ENCODE measurements at regions of chr12 and their contacts with region 1.

Region 1: GRCh38 chr12:111812881-111813741 is 28.9 kb upstream of the MAPKAPK5 start:
- DNase-seq: peak; percentile 50 to 76
- H3K4me3 ChIP-seq: no peak overlapping the region
- H3K27ac ChIP-seq: no peak overlapping the region
- H3K4me1 ChIP-seq: no peaks in the 10 kb centered on the region
- H3K27me3 ChIP-seq: no peaks in the 10 kb centered on the region
- CTCF ChIP-seq: peak; percentile 69 to 88 (median 86)
- EP300 ChIP-seq: no peak
- POLR2A ChIP-seq: no peak
- RAD21 ChIP-seq: peak; percentile 84 to 85

Region 2: GRCh38 chr12:111557271-111558106 is 255.6 kb before region 1 on chr12:
- CTCF ChIA-PET with region 1: no interaction called
- POLR2A ChIA-PET with region 1: no interaction called
- DNase-seq: no peak
- H3K4me3 ChIP-seq: no peak overlapping the region
- H3K27ac ChIP-seq: no peak overlapping the region
- H3K4me1 ChIP-seq: no peaks in the 10 kb centered on the region
- H3K27me3 ChIP-seq: no peaks in the 10 kb centered on the region
- CTCF ChIP-seq: no peak
- EP300 ChIP-seq: no peak
- POLR2A ChIP-seq: no peak
- RAD21 ChIP-seq: no peak

Region 3: DNA sequence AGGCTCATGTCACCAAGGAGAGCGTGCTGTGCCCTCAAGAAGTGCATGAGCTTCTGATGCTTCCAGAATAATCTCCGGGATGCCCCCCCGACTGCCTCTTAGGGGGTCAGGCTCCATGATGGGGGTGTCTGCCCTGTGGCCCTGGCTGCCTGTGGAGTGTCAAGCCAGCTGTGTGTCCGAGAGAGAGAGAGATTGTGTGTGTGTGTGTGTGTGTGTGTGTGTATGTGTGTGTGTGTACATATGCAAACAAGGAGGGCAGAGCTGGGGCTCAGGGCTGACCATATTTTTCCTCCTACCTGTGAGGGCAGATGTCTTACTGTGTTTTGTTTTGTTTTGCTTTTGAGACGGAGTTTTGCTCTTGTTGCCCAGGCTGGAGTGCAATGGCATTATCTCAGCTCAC is 52.0 kb before region 1 on chr12:
- CTCF ChIA-PET with region 1: interaction called, 165 read pairs
- POLR2A ChIA-PET with region 1: interaction called, 6 read pairs
- DNase-seq: no peak
- H3K4me3 ChIP-seq: no peak overlapping the region
- H3K27ac ChIP-seq: no peak overlapping the region
- H3K4me1 ChIP-seq: peaks cover 0 to 11% (median 8%) of the 10 kb centered on the region in 4 experiments; a peak in 3 of 7 replicates
- H3K27me3 ChIP-seq: peaks cover 0 to 3% (median 0%) of the 10 kb centered on the region in 4 experiments; a peak in 3 of 7 replicates
- CTCF ChIP-seq: no peak
- EP300 ChIP-seq: no peak
- POLR2A ChIP-seq: no peak
- RAD21 ChIP-seq: no peak

Region 4: DNA sequence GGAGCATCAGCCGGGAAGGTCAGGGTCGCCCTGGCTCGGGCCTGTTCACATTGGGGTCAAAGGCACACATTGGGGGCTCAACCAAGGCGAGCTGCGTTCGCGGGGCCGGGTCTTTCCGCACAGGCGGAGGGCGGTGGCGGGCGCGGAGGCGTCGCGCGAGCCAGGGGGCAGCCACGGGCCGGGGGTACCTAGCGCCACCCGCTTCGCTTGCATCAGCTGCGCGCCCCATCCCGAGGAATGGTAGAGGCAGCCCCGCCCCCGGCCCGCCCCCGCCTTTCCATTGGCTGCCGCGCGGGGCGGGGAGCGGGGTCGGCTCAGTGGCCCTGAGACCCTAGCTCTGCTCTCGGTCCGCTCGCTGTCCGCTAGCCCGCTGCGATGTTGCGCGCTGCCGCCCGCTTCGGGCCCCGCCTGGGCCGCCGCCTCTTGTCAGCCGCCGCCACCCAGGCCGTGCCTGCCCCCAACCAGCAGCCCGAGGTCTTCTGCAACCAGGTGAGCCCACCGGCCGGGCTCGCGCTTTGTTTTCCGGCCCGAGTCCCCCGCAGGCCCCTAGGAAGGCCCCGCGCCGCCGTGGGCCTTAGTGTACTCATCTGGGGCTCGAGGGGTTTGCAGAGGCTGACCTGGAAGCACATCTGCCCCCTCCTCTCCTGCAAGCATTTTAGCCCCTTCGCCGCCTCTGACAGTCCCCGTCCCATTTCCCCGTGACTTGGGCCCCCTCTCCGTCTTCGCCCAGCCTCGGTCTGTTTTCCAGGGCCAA is 46.3 kb before region 1 on chr12 and contains the start of gene ALDH2:
- CTCF ChIA-PET with region 1: interaction called, 18 read pairs
- POLR2A ChIA-PET with region 1: interaction called, 7 read pairs
- DNase-seq: peak; percentile 50 to 88
- H3K4me3 ChIP-seq: peak within 1 kb of the TSS; percentile 62 to 85 (median 70)
- H3K27ac ChIP-seq: peak within 1 kb of the TSS; percentile 47; the same call in 1 of the 2 replicates
- H3K4me1 ChIP-seq: peaks cover 0 to 11% (median 3%) of the 10 kb centered on the region in 4 experiments; a peak in 4 of 7 replicates
- H3K27me3 ChIP-seq: peaks cover 0 to 5% (median 0%) of the 10 kb centered on the region in 4 experiments; a peak in 3 of 7 replicates
- CTCF ChIP-seq: no peak
- EP300 ChIP-seq: peak in 1 of 2 experiments; percentile 84; a peak in 1 of 3 replicates
- POLR2A ChIP-seq: peak; percentile 62 to 89
- RAD21 ChIP-seq: no peak
- total RNA-seq, gene ALDH2: 40.4 and 43.8 TPM in 2 replicates